ENCODE measurements at regions of chr5 and their contacts with region 1.

Region 1: DNA sequence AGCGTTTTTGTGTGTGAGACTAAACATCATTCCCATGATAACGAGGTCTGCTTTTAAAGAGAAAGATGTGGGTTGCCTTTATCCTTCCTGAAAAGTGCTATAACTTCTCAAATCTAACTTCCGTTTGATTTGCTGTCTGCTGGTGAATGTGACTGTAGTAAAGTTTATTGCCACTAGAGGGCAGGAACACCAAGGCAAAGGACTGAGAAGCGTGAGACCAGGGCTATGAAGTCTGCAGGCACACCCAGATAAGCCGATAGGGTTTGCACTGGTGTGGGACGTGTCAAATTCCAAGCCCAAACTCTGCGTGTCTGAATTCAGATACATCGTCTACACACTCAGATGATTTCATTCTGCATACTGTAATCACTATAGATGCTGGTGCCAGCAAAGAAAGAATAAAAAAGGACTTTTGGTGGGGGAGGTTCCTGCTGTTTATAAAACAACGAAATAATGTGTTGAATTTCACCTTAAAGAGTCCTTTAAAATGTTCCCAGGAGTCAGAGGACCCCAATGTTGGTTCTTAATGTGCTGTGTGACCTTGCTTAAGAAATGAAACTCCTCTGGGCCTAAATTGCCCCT is 87.2 kb downstream of the PTTG1 start:
- DNase-seq: peak; percentile 76
- ATAC-seq: peak; percentile 88
- H3K4me3 ChIP-seq: no peak overlapping the region
- H3K27ac ChIP-seq: no peak overlapping the region
- H3K4me1 ChIP-seq: peaks cover 15% of the 10 kb centered on the region; the same call in 1 of the 2 replicates
- H3K27me3 ChIP-seq: no peaks in the 10 kb centered on the region
- CTCF ChIP-seq: peak; percentile 76 to 94 (median 92)
- EP300 ChIP-seq: no peak
- POLR2A ChIP-seq: no peak
- RAD21 ChIP-seq: peak; percentile 99

Region 2: GRCh38 chr5:160418561-160419457 is 90.1 kb before region 1 on chr5 and contains the start of gene SLU7:
- CTCF ChIA-PET with region 1: interaction called, 8 read pairs
- POLR2A ChIA-PET with region 1: interaction called, 7 read pairs
- RAD21 ChIA-PET with region 1: interaction called, 7 read pairs
- SMC1A ChIA-PET with region 1: interaction called, 15 read pairs
- in situ Hi-C with region 1: no loop called
- intact Hi-C with region 1: no loop called
- DNase-seq: peak; percentile 91
- ATAC-seq: peak; percentile 80
- H3K4me3 ChIP-seq: peak within 1 kb of the TSS; percentile 72
- H3K27ac ChIP-seq: peak within 1 kb of the TSS; percentile 71
- H3K4me1 ChIP-seq: peaks cover 15% of the 10 kb centered on the region
- H3K27me3 ChIP-seq: no peaks in the 10 kb centered on the region
- CTCF ChIP-seq: no peak
- EP300 ChIP-seq: no peak; a peak in 1 of 4 replicates
- POLR2A ChIP-seq: peak; percentile 86
- RAD21 ChIP-seq: no peak
- polyA plus RNA-seq, gene SLU7: 40.9 to 41.2 TPM

Region 3: DNA sequence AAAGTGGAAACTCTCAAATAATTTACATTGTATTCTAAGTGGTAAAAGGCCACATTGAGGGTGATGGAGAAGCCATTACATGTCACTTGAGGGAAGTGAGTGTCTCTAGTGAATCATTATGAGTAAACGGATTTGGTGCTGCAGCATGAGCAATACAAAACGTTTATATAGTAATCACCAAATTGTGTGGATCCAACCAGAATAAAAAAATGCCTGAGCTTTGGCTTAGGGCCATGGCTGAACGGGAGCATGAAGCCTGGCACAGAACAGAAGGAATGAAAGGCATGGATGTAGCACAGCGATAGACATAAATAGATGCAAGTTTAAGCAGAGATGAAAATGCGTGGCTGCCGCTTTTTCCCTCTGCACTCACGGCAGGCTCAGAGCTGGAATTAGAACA is 28.9 kb before region 1 on chr5:
- CTCF ChIA-PET with region 1: interaction called, 29 read pairs
- POLR2A ChIA-PET with region 1: interaction called, 8 read pairs
- RAD21 ChIA-PET with region 1: interaction called, 16 read pairs
- SMC1A ChIA-PET with region 1: interaction called, 20 read pairs
- in situ Hi-C with region 1: no loop called
- intact Hi-C with region 1: no loop called
- DNase-seq: no peak
- ATAC-seq: peak; percentile 8; the same call in 2 of the 3 replicates
- H3K4me3 ChIP-seq: no peak overlapping the region
- H3K27ac ChIP-seq: no peak overlapping the region
- H3K4me1 ChIP-seq: peaks cover 13% of the 10 kb centered on the region; the same call in 1 of the 2 replicates
- H3K27me3 ChIP-seq: no peaks in the 10 kb centered on the region
- CTCF ChIP-seq: no peak
- EP300 ChIP-seq: no peak
- POLR2A ChIP-seq: no peak
- RAD21 ChIP-seq: no peak

Region 4: GRCh38 chr5:160675988-160676387 is 167.1 kb after region 1 on chr5:
- CTCF ChIA-PET with region 1: interaction called, 4 read pairs
- POLR2A ChIA-PET with region 1: no interaction called
- RAD21 ChIA-PET with region 1: no interaction called
- SMC1A ChIA-PET with region 1: interaction called, 8 read pairs
- in situ Hi-C with region 1: no loop called
- intact Hi-C with region 1: loop called (anchors 10 kb)
- DNase-seq: no peak
- ATAC-seq: peak; percentile 76
- H3K4me3 ChIP-seq: no peak overlapping the region
- H3K27ac ChIP-seq: no peak overlapping the region
- H3K4me1 ChIP-seq: no peaks in the 10 kb centered on the region
- H3K27me3 ChIP-seq: no peaks in the 10 kb centered on the region; a peak in 1 of 4 replicates
- CTCF ChIP-seq: peak in 1 of 3 experiments; percentile 42; a peak in 3 of 6 replicates
- EP300 ChIP-seq: no peak
- POLR2A ChIP-seq: no peak
- RAD21 ChIP-seq: peak; percentile 44

Region 5: GRCh38 chr5:160693831-160694465 is 185.1 kb after region 1 on chr5:
- CTCF ChIA-PET with region 1: no interaction called
- POLR2A ChIA-PET with region 1: no interaction called
- RAD21 ChIA-PET with region 1: no interaction called
- SMC1A ChIA-PET with region 1: no interaction called
- in situ Hi-C with region 1: no loop called
- intact Hi-C with region 1: no loop called
- DNase-seq: no peak
- ATAC-seq: no peak
- H3K4me3 ChIP-seq: no peak overlapping the region
- H3K27ac ChIP-seq: no peak overlapping the region
- H3K4me1 ChIP-seq: no peaks in the 10 kb centered on the region
- H3K27me3 ChIP-seq: no peaks in the 10 kb centered on the region
- CTCF ChIP-seq: no peak
- EP300 ChIP-seq: no peak
- POLR2A ChIP-seq: no peak
- RAD21 ChIP-seq: no peak

Region 6: DNA sequence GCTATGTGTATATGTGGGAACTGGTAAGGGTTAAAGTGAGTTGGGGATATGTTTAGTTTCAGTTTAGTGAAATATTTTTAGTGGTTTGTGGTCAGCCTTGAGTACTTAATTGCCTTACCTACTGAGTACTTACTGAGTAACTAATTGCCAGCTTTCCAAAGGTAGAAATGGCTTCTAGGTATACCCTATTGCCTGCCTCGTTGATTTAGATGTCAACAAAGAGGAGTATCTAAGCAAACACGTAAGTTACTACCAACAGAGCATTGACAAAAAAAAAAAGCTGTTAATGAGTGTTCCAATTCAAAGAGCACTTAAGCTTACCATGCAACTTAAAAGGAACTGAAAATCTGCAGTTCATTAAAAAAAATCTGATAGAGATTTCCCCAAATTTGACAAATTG is 334.4 kb after region 1 on chr5:
- CTCF ChIA-PET with region 1: interaction called, 10 read pairs
- POLR2A ChIA-PET with region 1: interaction called, 3 read pairs
- RAD21 ChIA-PET with region 1: interaction called, 4 read pairs
- SMC1A ChIA-PET with region 1: interaction called, 14 read pairs
- in situ Hi-C with region 1: no loop called
- intact Hi-C with region 1: no loop called
- DNase-seq: peak; percentile 89
- ATAC-seq: peak; percentile 99
- H3K4me3 ChIP-seq: 0 out of 2 replicates have a peak overlapping the region, but pooled peaks have one; percentile 25
- H3K27ac ChIP-seq: no peak overlapping the region
- H3K4me1 ChIP-seq: no peaks in the 10 kb centered on the region
- H3K27me3 ChIP-seq: no peaks in the 10 kb centered on the region
- CTCF ChIP-seq: no peak
- EP300 ChIP-seq: peak; percentile 92 to 94
- POLR2A ChIP-seq: no peak
- RAD21 ChIP-seq: no peak

Region 7: DNA sequence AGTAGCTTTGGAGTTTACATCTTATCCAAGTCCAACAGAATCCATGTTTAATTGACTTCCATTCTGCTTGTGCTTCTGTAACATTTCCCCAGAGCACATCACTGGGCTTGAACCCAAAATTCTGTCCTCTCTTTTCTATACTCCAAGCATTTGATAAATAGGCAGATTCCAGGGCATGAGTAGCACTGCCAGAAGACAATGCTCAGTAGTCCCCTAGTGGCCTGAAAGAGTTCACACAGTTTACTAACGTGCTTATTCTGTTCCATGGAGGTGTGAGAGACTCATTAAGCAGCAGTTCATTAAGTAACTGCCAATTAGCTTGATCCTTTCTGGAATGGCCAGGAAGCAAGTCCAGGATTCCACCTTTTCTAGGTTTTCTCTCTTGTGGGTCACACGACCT is 1167.2 kb after region 1 on chr5:
- CTCF ChIA-PET with region 1: no interaction called
- POLR2A ChIA-PET with region 1: no interaction called
- RAD21 ChIA-PET with region 1: no interaction called
- SMC1A ChIA-PET with region 1: no interaction called
- in situ Hi-C with region 1: no loop called
- intact Hi-C with region 1: loop called (anchors 5 kb)
- DNase-seq: peak; percentile 1
- ATAC-seq: peak; percentile 91
- H3K4me3 ChIP-seq: no peak overlapping the region
- H3K27ac ChIP-seq: no peak overlapping the region
- H3K4me1 ChIP-seq: no peaks in the 10 kb centered on the region
- H3K27me3 ChIP-seq: no peaks in the 10 kb centered on the region
- CTCF ChIP-seq: peak; percentile 61 to 69 (median 66); a peak in 5 of 6 replicates
- EP300 ChIP-seq: no peak
- POLR2A ChIP-seq: no peak
- RAD21 ChIP-seq: peak; percentile 73

Measured in GM12878 (cell line).